ENCODE measurements at regions of chr1 and their contacts with region 1.

Region 1: DNA sequence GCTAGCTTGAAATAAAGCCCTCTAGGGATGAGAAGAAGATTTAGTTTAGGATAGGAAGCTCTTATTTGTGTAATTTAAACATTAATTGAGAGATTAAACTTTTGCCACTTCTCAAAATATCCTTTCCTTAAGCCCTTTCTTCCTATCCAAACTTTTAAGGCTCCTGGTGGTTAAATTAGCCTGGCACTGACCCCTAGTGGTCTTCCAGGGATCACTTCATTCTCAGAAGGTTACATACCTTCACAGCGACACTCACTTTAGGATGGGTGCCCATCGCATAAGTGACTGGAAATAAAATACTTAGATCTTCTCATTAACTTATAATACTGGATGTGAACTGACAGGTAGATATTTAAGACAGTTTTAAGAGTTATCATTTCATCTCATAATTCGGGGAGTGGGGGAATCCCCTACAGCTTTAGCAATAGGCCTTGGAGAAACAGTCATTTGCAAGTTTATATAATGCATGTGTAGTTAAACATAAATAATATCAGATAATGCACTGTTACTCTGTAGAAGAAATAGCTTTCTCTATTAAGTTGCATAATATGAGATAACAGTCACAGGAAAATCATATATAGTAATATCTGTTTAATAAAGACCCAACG is 7.4 kb downstream of the LHX9 start:
- DNase-seq: peak in 1 of 5 donors; percentile 47
- H3K4me3 ChIP-seq: no peak overlapping the region
- H3K4me3 Mint-ChIP-seq: no peak overlapping the region
- H3K27ac ChIP-seq: no peak overlapping the region
- H3K27ac Mint-ChIP-seq: no peak overlapping the region
- H3K4me1 ChIP-seq: peaks cover 18% of the 10 kb centered on the region
- H3K4me1 Mint-ChIP-seq: peaks cover 11 to 23% (median 17%) of the 10 kb centered on the region in 4 donors
- H3K27me3 ChIP-seq: peaks cover 43% of the 10 kb centered on the region
- H3K27me3 Mint-ChIP-seq: peaks cover 54 to 57% of the 10 kb centered on the region in 2 donors

Region 2: DNA sequence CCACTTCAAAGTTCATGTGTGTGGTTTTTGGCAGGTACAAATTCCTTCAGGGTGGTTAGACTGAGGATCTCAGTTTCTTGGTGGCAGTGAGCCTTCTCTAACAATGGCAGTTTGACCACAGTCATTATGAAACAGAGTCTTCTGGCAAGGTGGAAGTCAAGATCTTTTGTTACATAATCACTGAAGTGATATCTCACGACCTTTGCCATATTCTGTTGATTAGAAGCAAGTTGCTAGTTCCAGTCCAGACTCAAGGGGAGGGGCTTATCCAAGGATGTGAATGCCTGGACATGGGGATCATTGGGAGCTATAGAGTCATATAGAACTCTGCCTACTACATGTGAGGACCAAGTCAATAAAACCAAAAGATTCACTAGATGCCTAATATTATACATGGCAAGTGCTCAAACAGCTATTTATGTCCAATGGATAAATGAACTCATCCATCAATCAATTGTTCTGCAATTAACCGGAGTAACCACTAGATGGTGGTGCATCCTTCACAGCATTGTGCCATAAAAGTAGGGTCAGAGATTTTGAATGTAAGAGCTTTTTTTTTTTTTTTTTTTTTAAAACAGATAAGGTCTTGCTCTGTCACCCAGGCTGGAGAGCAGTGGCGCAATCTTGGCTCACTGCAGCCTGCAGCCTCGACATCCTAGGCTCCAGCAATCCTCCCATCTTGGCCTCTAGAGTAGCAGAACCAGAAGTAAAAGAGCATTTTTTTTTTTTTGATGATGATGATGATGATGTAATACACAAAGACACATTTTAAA is 524.7 kb before region 1 on chr1:
- CTCF ChIA-PET with region 1: interaction called, 3 read pairs
- POLR2A ChIA-PET with region 1: no interaction called
- intact Hi-C with region 1: loop called (anchors 5 kb)
- DNase-seq: peak; percentile 36 to 47 (median 41)
- H3K4me3 ChIP-seq: no peak overlapping the region
- H3K4me3 Mint-ChIP-seq: peak overlapping the region in 7 of 8 donors; percentile 6 to 67 (median 41)
- H3K27ac ChIP-seq: no peak overlapping the region
- H3K27ac Mint-ChIP-seq: no peak overlapping the region
- H3K4me1 ChIP-seq: no peaks in the 10 kb centered on the region
- H3K4me1 Mint-ChIP-seq: peaks cover 0 to 6% (median 2%) of the 10 kb centered on the region in 4 donors
- H3K27me3 ChIP-seq: no peaks in the 10 kb centered on the region
- H3K27me3 Mint-ChIP-seq: peaks cover 4 to 11% of the 10 kb centered on the region in 2 donors

Region 3: GRCh38 chr1:197526736-197527371 is 397.8 kb before region 1 on chr1:
- CTCF ChIA-PET with region 1: interaction called, 16 read pairs
- POLR2A ChIA-PET with region 1: no interaction called
- intact Hi-C with region 1: loop called (anchors 1 kb)
- DNase-seq: peak in 4 of 5 donors; percentile 26 to 43 (median 37)
- H3K4me3 ChIP-seq: no peak overlapping the region
- H3K4me3 Mint-ChIP-seq: no peak overlapping the region
- H3K27ac ChIP-seq: no peak overlapping the region
- H3K27ac Mint-ChIP-seq: no peak overlapping the region
- H3K4me1 ChIP-seq: no peaks in the 10 kb centered on the region
- H3K4me1 Mint-ChIP-seq: no peaks in the 10 kb centered on the region
- H3K27me3 ChIP-seq: no peaks in the 10 kb centered on the region
- H3K27me3 Mint-ChIP-seq: no peaks in the 10 kb centered on the region

Region 4: DNA sequence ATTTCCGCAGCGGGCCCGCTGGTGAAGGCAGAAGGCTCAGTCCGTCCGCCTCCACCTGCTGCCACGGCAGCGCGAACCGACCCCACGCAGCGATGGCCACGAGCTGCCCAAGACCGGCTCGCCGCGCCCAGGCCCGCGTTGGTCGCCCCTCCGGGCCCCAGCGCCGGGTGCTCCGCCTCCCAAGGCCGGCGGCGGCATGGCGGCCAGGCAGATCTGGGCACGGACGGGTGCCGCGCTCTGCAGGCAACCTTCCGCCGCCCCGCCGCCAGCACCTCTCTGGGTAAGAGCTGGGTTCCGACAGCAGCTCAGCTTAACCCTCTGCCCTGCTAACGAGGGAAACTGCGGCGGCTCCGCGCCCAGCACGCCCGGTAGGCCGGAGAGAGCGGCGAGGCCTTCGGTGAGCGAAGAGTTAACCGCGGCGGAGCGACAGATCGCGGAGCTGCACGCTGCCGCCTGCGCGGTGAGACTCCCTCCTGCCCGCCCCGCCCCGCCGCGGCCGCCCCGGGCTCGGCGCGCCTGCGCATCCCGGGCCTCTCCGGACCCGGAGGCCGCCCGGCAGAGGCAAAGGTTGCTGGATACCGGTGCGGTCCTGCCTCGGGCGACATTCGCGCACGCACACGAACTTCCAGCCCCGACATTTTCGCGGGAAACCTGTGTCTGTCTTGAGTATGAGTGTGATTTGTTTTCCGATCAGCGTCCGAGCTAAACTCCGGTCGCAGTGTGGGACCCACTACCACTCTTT is 22.0 kb before region 1 on chr1 and contains the start of gene C1orf53:
- CTCF ChIA-PET with region 1: interaction called, 14 read pairs
- POLR2A ChIA-PET with region 1: no interaction called
- intact Hi-C with region 1: loop called (anchors 2 kb)
- DNase-seq: peak; percentile 71 to 85 (median 76)
- H3K4me3 ChIP-seq: peak within 1 kb of the TSS; percentile 26 to 75
- H3K4me3 Mint-ChIP-seq: peak within 1 kb of the TSS; percentile 87 to 93 (median 90)
- H3K27ac ChIP-seq: peak within 1 kb of the TSS; percentile 44
- H3K27ac Mint-ChIP-seq: peak within 1 kb of the TSS; percentile 30 to 85 (median 82)
- H3K4me1 ChIP-seq: peaks cover 15% of the 10 kb centered on the region
- H3K4me1 Mint-ChIP-seq: peaks cover 2 to 18% (median 12%) of the 10 kb centered on the region in 4 donors
- H3K27me3 ChIP-seq: peaks cover 43% of the 10 kb centered on the region
- H3K27me3 Mint-ChIP-seq: peaks cover 28 to 48% of the 10 kb centered on the region in 2 donors
- total RNA-seq, gene C1orf53: not detected

Region 5: DNA sequence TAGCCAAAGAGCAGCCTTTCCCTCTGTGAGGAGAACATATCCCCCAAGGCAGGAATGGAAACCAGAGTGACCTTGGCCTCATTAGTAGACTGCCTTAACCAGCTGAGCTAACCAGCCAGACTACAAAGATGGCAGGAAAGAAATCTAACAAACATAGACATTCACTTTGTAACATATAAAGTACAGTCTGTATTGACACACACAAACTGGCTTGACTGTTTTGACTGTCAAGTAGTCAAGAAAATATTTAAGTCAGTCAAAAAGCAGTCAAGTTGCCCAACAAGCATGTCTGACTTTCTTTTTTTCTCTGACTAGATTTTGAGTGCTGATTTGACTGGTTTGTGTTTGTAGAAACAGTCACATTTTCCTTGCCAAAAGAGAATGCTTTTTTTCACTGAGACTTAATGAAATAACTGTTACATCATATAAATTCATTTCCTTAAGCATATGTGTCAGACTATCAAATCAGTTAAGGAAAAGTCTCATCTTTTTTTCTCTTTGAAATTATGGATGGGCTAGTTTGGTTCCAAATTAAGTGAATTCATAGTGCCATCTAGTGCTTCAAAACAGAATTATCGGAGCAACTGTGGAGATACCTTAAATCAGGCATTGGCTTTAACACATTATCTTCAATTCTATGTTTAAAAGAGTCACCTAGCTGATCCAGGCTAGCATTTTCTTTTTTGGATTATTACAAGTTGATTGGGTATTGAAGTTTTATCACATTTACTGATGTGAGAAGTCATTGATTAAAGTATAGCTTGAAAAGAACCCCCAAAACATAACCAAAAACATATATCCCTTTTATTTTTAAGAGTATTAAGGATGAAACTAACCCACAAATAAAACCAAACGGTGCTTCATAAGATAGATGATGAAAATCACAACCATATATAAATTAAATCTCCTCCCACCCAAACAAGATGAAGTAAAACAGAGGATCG is 540.9 kb after region 1 on chr1:
- CTCF ChIA-PET with region 1: interaction called, 3 read pairs
- POLR2A ChIA-PET with region 1: no interaction called
- intact Hi-C with region 1: loop called (anchors 10 kb)
- DNase-seq: peak in 4 of 5 donors; percentile 30 to 36 (median 36)
- H3K4me3 ChIP-seq: no peak overlapping the region
- H3K4me3 Mint-ChIP-seq: no peak overlapping the region
- H3K27ac ChIP-seq: no peak overlapping the region
- H3K27ac Mint-ChIP-seq: no peak overlapping the region
- H3K4me1 ChIP-seq: no peaks in the 10 kb centered on the region
- H3K4me1 Mint-ChIP-seq: peaks cover 0 to 1% (median 0%) of the 10 kb centered on the region in 4 donors
- H3K27me3 ChIP-seq: no peaks in the 10 kb centered on the region
- H3K27me3 Mint-ChIP-seq: peaks cover 0 to under 1% of the 10 kb centered on the region in 2 donors

Region 6: DNA sequence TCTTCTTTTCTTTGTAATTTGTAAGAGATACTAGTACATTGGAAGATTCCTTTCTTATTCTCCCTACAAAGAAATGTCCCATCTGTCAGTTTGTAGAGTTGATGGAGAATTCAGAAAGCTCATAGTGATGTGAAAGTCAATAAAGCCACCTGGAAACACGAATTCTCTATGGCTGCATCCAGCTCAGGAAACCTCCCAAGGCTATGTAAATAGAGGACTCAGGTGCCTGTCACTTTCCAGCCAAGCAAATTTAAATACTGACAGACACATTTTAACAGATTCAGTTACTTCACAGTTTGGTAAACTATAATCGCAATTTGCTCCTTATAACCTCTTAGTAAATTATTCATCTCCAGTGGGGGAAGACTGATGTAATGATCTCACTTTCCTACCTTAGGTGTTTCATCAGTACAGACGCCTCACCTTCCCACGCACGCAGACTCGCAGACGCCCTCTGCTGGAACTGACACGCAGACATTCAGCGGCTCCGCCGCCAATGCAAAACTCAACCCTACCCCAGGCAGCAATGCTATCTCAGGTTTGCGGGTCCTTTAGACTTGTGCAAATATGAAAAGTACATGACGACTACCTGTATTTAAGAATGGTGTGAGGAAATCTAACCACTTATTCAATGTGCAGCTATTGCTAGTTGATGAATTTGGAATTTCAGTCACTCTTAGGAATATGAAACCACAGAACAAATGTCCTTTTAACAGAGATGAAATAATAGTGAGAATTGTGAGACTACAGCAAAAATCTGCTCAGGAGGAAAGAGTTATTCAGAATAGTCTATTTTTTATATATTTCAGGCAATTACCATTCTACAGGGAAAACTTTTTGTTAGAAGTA is 774.8 kb after region 1 on chr1:
- CTCF ChIA-PET with region 1: no interaction called
- POLR2A ChIA-PET with region 1: no interaction called
- intact Hi-C with region 1: no loop called
- DNase-seq: peak; percentile 60 to 72 (median 66)
- H3K4me3 ChIP-seq: no peak overlapping the region
- H3K4me3 Mint-ChIP-seq: peak overlapping the region in 6 of 8 donors; percentile 26 to 76 (median 52)
- H3K27ac ChIP-seq: peak overlapping the region; percentile 33
- H3K27ac Mint-ChIP-seq: peak overlapping the region; percentile 85 to 91 (median 87)
- H3K4me1 ChIP-seq: peaks cover 87% of the 10 kb centered on the region
- H3K4me1 Mint-ChIP-seq: peaks cover 59 to 82% (median 70%) of the 10 kb centered on the region in 4 donors
- H3K27me3 ChIP-seq: no peaks in the 10 kb centered on the region
- H3K27me3 Mint-ChIP-seq: no peaks in the 10 kb centered on the region